Heart left ventricle (tissue), 16 donors: ENCODE measurements at regions of chr2 and their contacts with region 1.

Region 1: DNA sequence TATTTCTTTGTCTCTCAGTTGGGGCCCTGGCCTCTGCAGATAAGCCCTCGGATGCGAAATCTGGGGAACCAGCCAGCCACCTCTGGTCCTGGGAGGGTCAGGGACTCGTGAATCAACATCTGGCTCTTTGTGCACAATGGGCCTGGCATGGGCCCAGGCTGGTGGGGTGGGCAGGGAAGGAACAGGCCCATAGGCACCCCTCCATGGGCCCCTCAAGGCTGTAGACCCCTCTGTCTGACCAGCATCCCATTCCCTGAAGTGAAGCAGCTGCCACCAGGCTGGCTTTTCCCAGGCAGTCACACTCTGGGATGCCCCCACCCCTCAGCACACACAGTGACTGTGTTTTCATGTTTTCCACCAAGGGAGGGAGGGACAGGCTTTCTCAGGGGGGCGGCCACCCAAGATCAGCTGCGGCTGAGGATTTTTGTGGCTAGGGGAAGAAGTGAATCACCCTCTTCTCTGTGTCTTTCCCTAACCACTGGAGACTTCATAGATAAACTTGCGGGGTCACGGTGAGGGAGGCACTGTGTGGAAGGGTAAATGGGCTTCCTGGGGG is 166.0 kb downstream of the AGAP1 start:
- DNase-seq: no peak
- ATAC-seq: peak in 3 of 4 donors; percentile 25 to 49 (median 43)
- H3K4me3 ChIP-seq: no peak overlapping the region
- H3K27ac ChIP-seq: no peak overlapping the region
- H3K4me1 ChIP-seq: peaks cover 0 to 32% (median 9%) of the 10 kb centered on the region in 12 donors
- H3K27me3 ChIP-seq: peaks cover 0 to 6% (median 0%) of the 10 kb centered on the region in 9 donors
- CTCF ChIP-seq: no peak
- POLR2A ChIP-seq: no peak

Region 2: GRCh38 chr2:235614900-235615712 is 44.7 kb before region 1 on chr2:
- intact Hi-C with region 1: loop called in 1 of 10 experiments (anchors 5 kb)
- DNase-seq: peak in 4 of 5 donors; percentile 60 to 82 (median 68)
- ATAC-seq: peak; percentile 84 to 93 (median 90)
- H3K4me3 ChIP-seq: no peak overlapping the region
- H3K27ac ChIP-seq: peak overlapping the region in 11 of 12 donors; percentile 12 to 66 (median 52)
- H3K4me1 ChIP-seq: peaks cover 0 to 46% (median 32%) of the 10 kb centered on the region in 12 donors
- H3K27me3 ChIP-seq: no peaks in the 10 kb centered on the region
- CTCF ChIP-seq: no peak
- POLR2A ChIP-seq: no peak